Cardiac septum (tissue), 1 donor: ENCODE measurements at regions of chr2 and their contacts with region 1.

Region 1: DNA sequence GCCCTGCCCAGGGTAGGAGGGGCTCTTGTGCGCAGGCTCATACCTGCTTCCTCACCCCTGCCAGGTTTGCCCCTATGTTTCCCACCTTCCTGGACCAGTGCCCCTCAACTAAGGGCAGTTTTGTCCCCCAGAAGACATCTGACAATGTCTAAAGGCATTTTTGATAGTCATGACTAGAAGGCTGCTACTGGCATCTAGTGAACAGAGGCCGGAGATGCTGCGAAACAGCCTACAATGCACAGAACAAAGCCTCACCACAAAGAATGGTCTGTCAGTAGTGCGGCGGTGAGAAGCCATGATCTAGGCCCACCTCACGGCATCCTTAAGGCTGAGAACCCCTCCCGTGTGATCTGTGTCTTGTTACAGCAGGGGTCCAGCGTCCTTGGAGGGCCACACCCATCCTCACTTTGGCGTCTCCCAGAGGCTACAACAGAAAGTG is 96.0 kb downstream of the TMEM17 start:
- DNase-seq: no peak

Region 2: GRCh38 chr2:61922714-61923113 is 487.3 kb before region 1 on chr2:
- intact Hi-C with region 1: loop called (anchors 2 kb)
- DNase-seq: no peak

Region 3: GRCh38 chr2:61993444-61994024 is 416.5 kb before region 1 on chr2:
- intact Hi-C with region 1: loop called (anchors 1 kb)
- DNase-seq: no peak

Region 4: DNA sequence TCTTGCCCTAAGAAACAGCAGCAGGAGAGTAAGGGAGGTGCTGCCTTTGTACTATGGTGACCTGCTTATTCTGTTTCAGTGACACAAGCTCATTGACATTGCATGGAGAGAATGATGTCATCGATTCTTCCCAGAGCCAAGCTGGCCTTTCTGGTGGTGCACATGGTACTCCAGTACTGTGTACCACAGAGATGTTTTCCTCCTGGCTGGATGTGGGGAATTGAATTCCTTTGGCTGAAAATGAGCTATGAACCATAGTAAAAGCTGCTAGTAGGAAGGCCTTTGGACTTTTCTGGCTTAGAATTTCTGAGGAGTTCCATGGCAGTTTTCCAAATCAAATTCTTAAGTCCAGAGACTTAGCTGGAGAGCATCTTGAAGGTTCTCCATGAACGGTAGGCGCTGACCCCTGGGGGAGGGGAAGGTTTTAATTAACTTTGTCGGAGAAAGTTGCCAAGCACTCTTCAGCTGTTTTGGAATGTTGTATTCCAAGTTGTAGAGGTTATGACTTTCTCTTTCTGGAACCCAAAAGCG is 231.2 kb before region 1 on chr2:
- intact Hi-C with region 1: no loop called
- DNase-seq: no peak

Region 5: GRCh38 chr2:62216616-62217015 is 193.4 kb before region 1 on chr2:
- intact Hi-C with region 1: loop called (anchors 5 kb)
- DNase-seq: no peak

Region 6: DNA sequence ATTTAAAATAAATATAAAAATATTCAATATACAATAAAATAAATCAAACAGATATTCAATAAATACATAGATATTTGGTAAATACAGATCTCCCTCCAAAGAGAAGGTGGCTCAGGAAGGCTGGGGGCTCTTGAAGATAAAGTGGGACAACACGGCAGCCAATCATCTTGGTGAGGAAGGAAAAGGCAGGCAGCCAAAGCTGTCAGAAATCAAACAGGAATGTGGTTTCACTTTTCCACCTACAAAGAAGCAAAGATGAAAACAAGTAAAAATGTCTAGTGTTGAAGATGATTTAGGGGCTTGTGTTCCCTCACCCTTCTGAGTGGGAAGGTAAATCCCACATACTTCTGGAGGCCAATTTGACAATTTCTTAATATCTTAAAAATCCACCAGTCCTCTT is 128.4 kb before region 1 on chr2:
- intact Hi-C with region 1: no loop called
- DNase-seq: no peak

Region 7: DNA sequence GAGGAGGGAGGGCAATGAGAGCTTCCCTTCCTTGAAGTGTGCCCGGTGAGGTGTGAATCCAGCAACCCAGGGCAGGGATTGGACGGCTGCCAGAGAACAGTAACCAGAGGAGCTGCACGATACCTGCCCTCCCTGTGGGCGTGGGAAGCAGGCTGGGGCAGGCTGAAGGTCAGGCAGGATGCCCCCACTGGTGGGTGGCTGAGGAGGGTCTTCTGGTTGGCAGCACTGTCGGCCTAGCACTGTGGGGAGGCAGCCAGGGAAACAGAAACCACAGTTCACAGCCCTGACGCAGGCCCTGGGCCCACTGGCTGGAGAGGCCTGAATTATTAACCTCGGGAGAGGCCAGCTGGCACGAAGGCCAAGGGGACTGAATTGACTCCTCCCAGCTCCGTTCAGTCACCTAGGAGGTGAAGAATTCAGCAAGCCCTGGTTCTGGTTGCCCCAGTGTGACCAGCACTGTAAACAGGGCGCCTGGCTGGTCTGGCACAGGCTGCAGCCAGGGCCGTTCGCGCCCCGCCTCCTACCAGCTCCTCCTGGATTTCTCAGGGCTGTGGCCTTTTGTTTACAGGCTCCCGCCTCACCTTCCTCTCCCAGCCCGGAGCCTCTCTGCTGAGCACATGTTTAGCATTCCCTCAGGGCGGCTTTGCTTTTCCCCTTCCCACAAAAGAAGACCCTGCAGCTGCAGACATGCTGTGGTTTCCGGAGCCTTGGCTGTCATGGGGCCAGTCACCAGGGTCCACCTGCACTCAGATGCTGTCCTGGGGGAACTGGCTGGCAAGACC is 116.4 kb before region 1 on chr2:
- intact Hi-C with region 1: loop called (anchors 5 kb)
- DNase-seq: no peak

Region 8: GRCh38 chr2:62340994-62341484 is 69.0 kb before region 1 on chr2:
- intact Hi-C with region 1: loop called (anchors 5 kb)
- DNase-seq: peak; percentile 78

Region 9: GRCh38 chr2:62431512-62431911 is 21.5 kb after region 1 on chr2:
- intact Hi-C with region 1: no loop called
- DNase-seq: peak; percentile 53

Region 10: GRCh38 chr2:62443886-62444285 is 33.9 kb after region 1 on chr2:
- intact Hi-C with region 1: no loop called
- DNase-seq: no peak